Aorta (tissue), 5 donors: ENCODE measurements at regions of chr9 and their contacts with region 1.

Region 1: GRCh38 chr9:135085830-135086546 is 1.5 kb upstream of the OLFM1 start:
- DNase-seq: peak; percentile 69 to 91
- ATAC-seq: peak; percentile 81
- H3K4me3 ChIP-seq: no peak overlapping the region
- H3K27ac ChIP-seq: no peak overlapping the region
- H3K4me1 ChIP-seq: no peaks in the 10 kb centered on the region
- H3K27me3 ChIP-seq: no peaks in the 10 kb centered on the region

Region 2: DNA sequence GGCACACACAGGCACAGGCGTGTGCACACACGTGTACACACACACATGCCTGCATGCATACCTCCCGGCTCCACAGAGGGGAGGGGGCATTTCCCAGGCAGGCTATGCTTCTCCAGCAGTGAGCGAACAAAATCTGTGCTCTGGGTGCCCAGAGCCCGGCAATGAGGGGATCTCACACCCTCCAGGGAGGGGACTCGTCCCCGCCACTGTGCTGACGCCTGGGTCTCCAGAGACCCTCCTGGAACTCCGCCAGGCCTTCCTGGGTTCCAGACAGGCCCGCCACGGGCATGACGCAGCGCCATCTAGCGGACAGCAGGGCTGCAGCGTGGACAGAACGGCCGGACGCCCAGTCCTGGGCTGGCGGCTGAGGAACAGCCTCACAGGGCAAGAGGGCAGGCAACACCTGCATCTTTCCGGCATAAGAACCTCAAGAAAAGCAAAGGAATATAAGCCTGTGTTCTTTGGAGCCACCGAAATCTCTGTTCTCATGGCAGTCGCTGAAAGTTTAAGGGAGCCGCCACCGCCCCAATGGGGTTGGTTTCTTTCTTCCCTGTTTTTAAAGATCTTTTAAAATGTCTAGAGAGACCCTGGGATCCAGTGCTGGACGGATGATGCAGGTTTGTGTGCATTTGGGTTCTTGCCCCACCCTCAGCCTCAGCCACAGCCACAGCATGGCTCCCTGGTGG is 258.0 kb after region 1 on chr9:
- intact Hi-C with region 1: loop called (anchors 2 to 5 kb)
- DNase-seq: peak; percentile 57 to 89
- ATAC-seq: peak; percentile 19
- H3K4me3 ChIP-seq: no peak overlapping the region
- H3K27ac ChIP-seq: no peak overlapping the region
- H3K4me1 ChIP-seq: no peaks in the 10 kb centered on the region
- H3K27me3 ChIP-seq: no peaks in the 10 kb centered on the region

Region 3: GRCh38 chr9:135413459-135413858 is 327.5 kb after region 1 on chr9:
- intact Hi-C with region 1: loop called (anchors 2 kb)
- DNase-seq: peak in 1 of 2 donors; percentile 72
- ATAC-seq: no peak
- H3K4me3 ChIP-seq: no peak overlapping the region
- H3K27ac ChIP-seq: no peak overlapping the region
- H3K4me1 ChIP-seq: no peaks in the 10 kb centered on the region
- H3K27me3 ChIP-seq: no peaks in the 10 kb centered on the region